ENCODE measurements at regions of chr16 and their contacts with region 1.

Region 1: GRCh38 chr16:50954469-50954868 is 196.6 kb downstream of the SALL1 start:
- DNase-seq: no peak
- H3K4me3 ChIP-seq: no peak overlapping the region
- H3K27ac ChIP-seq: no peak overlapping the region
- H3K4me1 ChIP-seq: no peaks in the 10 kb centered on the region
- H3K27me3 ChIP-seq: peaks cover 46% of the 10 kb centered on the region
- CTCF ChIP-seq: no peak

Region 2: GRCh38 chr16:50419116-50419515 is 535.4 kb before region 1 on chr16:
- CTCF ChIA-PET with region 1: no interaction called
- POLR2A ChIA-PET with region 1: no interaction called
- intact Hi-C with region 1: no loop called
- DNase-seq: no peak
- H3K4me3 ChIP-seq: no peak overlapping the region
- H3K27ac ChIP-seq: no peak overlapping the region
- H3K4me1 ChIP-seq: no peaks in the 10 kb centered on the region
- H3K27me3 ChIP-seq: no peaks in the 10 kb centered on the region
- CTCF ChIP-seq: no peak

Region 3: DNA sequence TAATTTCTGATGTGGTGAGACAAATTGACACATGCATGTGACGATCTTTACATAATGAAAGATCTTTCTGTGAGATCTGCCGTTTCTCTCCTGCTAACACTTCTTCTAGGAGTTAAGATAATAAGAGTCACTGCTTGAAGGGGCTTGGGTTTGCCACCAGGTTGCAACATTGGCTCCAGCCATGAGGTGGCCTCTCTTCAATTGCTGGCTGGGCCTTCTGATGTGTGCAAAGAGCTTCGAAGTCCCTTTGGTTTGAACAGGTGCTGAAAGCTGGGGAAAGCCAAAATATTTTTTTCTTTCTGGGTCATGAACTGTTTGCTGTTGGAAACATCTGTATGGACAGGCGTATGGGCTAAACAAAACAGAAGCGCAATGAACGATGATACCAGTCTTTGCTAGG is 400.7 kb after region 1 on chr16:
- CTCF ChIA-PET with region 1: no interaction called
- POLR2A ChIA-PET with region 1: no interaction called
- intact Hi-C with region 1: no loop called
- DNase-seq: no peak
- H3K4me3 ChIP-seq: no peak overlapping the region
- H3K27ac ChIP-seq: no peak overlapping the region
- H3K4me1 ChIP-seq: no peaks in the 10 kb centered on the region
- H3K27me3 ChIP-seq: no peaks in the 10 kb centered on the region; the same call in 1 of the 2 replicates
- CTCF ChIP-seq: no peak

Region 4: GRCh38 chr16:52647588-52647987 is 1693.1 kb after region 1 on chr16:
- CTCF ChIA-PET with region 1: no interaction called
- POLR2A ChIA-PET with region 1: interaction called, 10 read pairs
- intact Hi-C with region 1: no loop called
- DNase-seq: no peak
- H3K4me3 ChIP-seq: no peak overlapping the region
- H3K27ac ChIP-seq: no peak overlapping the region
- H3K4me1 ChIP-seq: no peaks in the 10 kb centered on the region
- H3K27me3 ChIP-seq: no peaks in the 10 kb centered on the region
- CTCF ChIP-seq: no peak